ENCODE measurements at regions of chr6 and their contacts with region 1.

Region 1: GRCh38 chr6:14641423-14642122 is 524.0 kb downstream of the CD83 start:
- DNase-seq: no peak
- H3K4me3 ChIP-seq: no peak overlapping the region
- H3K27ac ChIP-seq: no peak overlapping the region
- H3K4me1 ChIP-seq: peaks cover 14 to 26% (median 19%) of the 10 kb centered on the region in 4 donors
- H3K27me3 ChIP-seq: no peaks in the 10 kb centered on the region
- CTCF ChIP-seq: no peak
- EP300 ChIP-seq: no peak
- POLR2A ChIP-seq: no peak

Region 2: DNA sequence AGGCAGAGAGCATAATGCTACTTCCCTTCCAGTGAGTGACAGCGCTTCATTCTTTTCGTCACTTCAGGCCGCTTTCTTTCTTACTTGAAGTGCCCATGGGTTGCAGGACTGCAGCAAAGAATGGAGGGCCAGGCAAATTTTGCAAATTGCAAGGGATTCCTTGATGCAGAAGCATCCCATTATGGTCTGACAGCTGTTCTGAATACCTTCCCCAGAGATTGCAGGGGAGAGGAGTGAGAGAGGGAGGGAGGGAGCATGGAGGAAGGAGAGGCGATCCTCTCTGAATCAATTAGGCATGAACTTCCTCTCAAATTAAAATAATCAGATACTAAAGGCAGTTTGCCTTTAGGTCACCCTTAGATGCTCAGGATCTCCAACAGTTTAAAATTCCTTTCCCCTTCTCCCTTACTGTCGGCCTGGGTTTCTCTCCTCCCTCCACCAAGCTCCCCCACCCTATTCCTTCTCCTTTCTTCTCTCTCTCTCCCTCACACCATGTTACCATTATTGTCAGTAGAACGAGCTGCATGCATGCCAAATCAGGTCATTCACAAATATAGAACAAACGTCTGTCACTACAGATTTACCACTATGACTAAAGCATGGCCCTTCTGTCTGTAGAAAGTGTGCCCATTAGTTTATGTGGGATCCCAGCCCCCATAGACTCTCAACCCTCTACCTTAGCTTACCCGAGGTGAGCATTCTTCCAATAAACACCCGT is 234.8 kb before region 1 on chr6:
- intact Hi-C with region 1: no loop called
- DNase-seq: no peak
- H3K4me3 ChIP-seq: no peak overlapping the region
- H3K27ac ChIP-seq: no peak overlapping the region
- H3K4me1 ChIP-seq: no peaks in the 10 kb centered on the region
- H3K27me3 ChIP-seq: no peaks in the 10 kb centered on the region
- CTCF ChIP-seq: no peak
- EP300 ChIP-seq: no peak
- POLR2A ChIP-seq: no peak

Region 3: DNA sequence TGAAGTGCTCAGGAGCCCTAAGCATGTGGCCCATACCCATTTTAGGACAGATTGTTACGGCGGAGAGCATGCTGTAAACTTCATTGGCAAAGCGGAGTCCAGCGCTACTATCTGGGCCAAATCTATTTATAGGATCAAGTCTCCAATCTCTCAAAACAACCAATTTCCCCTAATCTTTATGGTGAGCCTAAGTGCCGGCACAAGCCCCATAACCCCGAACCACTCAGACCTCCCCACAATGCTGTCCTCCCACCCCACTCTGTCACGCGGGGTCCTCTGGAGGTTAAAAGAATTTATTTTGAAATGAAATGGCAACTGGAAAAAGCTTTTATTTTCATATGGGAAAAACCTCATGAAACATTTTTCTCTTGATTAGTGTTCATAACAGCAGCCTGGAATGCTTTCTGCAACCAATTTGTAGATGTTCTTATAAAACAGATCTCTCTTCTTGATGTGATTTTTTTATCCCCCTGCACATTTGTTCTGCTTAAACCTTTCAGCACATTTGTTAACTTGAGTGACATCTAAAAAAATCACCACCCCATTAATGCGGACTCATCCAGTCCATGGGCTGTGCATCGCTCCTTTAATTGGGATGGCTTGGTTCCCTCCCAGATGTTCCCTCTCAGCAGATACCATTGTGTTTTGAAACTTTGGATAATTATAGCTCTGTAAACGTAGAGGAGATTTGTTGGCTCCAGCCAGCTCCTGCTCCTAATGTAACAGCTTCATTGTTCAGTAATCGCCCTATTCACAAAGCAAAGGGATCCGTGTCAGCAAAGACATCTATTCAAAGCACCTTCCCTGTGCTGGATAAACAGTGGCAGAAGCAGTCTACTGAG is 200.4 kb before region 1 on chr6:
- intact Hi-C with region 1: loop called (anchors 10 kb)
- DNase-seq: no peak
- H3K4me3 ChIP-seq: peak overlapping the region; percentile 16 to 31 (median 27)
- H3K27ac ChIP-seq: peak overlapping the region; percentile 83 to 86 (median 84)
- H3K4me1 ChIP-seq: peaks cover 31 to 36% (median 35%) of the 10 kb centered on the region in 4 donors
- H3K27me3 ChIP-seq: no peaks in the 10 kb centered on the region
- CTCF ChIP-seq: no peak
- EP300 ChIP-seq: peak; percentile 9
- POLR2A ChIP-seq: no peak

Region 4: DNA sequence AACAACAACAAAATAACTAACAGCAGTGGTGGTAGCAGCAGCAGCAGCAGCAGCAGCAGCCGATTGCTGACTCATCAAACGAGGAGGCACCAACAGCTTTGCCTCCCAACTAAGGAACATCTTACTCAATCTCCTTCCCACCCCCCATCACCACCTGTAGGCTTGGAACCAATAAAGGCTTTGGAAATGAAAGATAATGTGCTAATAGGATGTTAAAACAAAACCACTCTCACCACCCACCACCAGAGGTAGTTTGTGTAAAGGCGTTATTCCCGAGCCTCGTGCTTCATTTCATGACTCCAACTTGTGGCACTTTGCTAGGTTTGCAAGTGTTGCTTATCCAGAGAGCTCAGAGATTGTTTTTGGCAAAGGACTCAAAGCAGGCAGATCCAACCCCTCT is 177.5 kb before region 1 on chr6:
- intact Hi-C with region 1: no loop called
- DNase-seq: no peak
- H3K4me3 ChIP-seq: no peak overlapping the region
- H3K27ac ChIP-seq: no peak overlapping the region
- H3K4me1 ChIP-seq: peaks cover 0 to 17% (median 6%) of the 10 kb centered on the region in 4 donors
- H3K27me3 ChIP-seq: no peaks in the 10 kb centered on the region
- CTCF ChIP-seq: no peak
- EP300 ChIP-seq: no peak
- POLR2A ChIP-seq: no peak

Region 5: DNA sequence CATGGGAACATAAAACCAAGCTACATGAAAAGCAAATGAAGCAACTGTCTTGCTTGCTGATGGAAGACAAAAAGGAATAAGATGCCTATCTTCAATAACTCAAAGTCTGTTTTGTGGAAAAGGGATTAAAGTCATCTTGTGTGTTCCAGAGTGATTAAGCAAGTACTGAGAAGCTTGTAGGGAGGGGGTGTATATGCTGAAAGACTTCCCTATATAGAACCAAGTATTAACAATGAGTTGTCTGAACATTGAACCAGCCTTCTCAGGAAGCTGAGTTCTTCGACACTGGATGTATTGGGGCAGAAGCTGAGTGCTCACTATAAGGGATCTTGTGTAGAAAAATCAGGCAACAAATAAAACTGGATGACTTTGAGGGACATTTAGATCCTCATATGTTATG is 72.2 kb before region 1 on chr6:
- intact Hi-C with region 1: no loop called
- DNase-seq: no peak
- H3K4me3 ChIP-seq: no peak overlapping the region
- H3K27ac ChIP-seq: no peak overlapping the region
- H3K4me1 ChIP-seq: no peaks in the 10 kb centered on the region
- H3K27me3 ChIP-seq: no peaks in the 10 kb centered on the region
- CTCF ChIP-seq: no peak
- EP300 ChIP-seq: no peak
- POLR2A ChIP-seq: no peak

Region 6: DNA sequence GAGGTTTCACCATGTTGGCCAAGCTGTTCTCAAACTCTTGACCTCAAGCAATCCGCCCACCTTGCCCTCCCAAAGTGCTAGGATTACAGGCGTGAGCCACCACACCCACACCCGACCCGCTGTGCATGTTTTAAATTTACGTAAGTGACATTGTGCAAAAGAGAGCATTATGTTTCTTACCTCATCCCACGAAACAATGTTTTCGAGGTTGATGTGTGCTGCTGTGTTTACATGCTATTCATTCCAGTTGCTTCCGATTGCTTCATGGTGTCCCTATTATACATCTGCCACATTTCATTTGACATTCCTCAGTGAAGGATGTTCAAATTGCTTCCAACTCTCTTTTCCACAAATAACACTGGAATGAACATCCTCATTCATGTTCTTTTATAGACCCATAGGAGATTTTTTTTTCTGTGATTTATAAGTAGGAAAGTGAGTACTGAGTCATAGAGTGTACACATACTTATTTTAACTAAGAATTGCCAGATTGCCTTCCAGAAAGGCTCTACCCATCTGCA is 200.4 kb after region 1 on chr6:
- intact Hi-C with region 1: loop called (anchors 10 kb)
- DNase-seq: no peak
- H3K4me3 ChIP-seq: no peak overlapping the region
- H3K27ac ChIP-seq: peak overlapping the region; percentile 28 to 72 (median 70)
- H3K4me1 ChIP-seq: peaks cover 4 to 26% (median 17%) of the 10 kb centered on the region in 4 donors
- H3K27me3 ChIP-seq: no peaks in the 10 kb centered on the region
- CTCF ChIP-seq: no peak
- EP300 ChIP-seq: peak; percentile 92
- POLR2A ChIP-seq: no peak

Region 7: GRCh38 chr6:15096894-15097837 is 455.6 kb after region 1 on chr6:
- intact Hi-C with region 1: no loop called
- DNase-seq: no peak
- H3K4me3 ChIP-seq: no peak overlapping the region
- H3K27ac ChIP-seq: no peak overlapping the region
- H3K4me1 ChIP-seq: no peaks in the 10 kb centered on the region
- H3K27me3 ChIP-seq: no peaks in the 10 kb centered on the region
- CTCF ChIP-seq: no peak
- EP300 ChIP-seq: no peak
- POLR2A ChIP-seq: no peak

Measured in esophagus muscularis mucosa (tissue), 4 donors.